Activated CD8-positive, alpha-beta T cell treated with anti-CD3 and anti-CD28 coated beads for 36 hours (primary cell): ENCODE measurements at regions of chr18 and their contacts with region 1.

Region 1: DNA sequence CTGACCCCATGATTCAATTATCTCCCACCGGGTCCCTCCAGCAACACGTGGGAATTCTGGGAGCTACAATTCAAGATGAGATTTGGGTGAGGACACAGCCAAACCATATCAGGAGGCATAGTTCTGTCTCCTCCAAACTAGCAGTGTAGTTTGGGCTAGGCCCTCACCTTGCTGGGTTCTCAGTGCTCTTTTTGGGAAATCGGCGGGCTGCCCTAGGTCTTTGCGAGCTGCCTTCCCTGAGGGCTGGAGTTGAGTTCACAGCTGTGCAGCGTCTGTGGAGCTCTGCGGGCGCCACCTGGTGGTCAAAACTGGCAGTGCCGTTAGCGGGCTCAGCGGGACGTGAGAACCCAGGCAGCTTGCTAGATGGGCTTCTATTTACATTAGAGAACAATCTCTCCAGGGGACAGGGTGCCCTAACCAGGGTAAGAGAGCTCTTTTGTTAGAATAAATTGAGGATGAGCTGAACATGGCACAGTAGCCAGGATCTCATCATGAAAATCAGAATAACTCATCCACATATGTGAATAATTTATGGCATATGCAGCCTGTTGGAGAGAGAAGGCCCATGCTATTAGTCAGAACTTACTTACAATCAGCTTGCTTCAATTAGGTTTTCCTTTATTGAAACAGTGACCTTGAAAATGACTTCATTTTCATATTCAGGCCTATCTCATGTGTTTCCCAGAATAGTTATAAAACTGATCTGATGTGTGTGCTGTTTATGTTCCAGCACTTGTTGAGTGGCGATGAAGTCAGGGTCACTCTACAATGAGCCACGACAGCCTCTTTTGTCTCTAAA is 27.4 kb upstream of the YES1 start:
- DNase-seq: peak; percentile 96
- ATAC-seq: peak; percentile 99
- H3K4me3 Mint-ChIP-seq: no peak overlapping the region
- H3K27ac Mint-ChIP-seq: no peak overlapping the region
- H3K4me1 Mint-ChIP-seq: peaks cover 5% of the 10 kb centered on the region
- H3K27me3 Mint-ChIP-seq: no peaks in the 10 kb centered on the region
- CTCF ChIP-seq: peak; percentile 97

Region 2: GRCh38 chr18:712401-713134 is 126.9 kb before region 1 on chr18 and contains the start of gene ENOSF1:
- CTCF ChIA-PET with region 1: interaction called, 32 read pairs
- POLR2A ChIA-PET with region 1: no interaction called
- intact Hi-C with region 1: loop called (anchors 10 kb)
- DNase-seq: peak; percentile 91
- ATAC-seq: peak; percentile 87
- H3K4me3 Mint-ChIP-seq: peak within 1 kb of the TSS; percentile 96
- H3K27ac Mint-ChIP-seq: peak within 1 kb of the TSS; percentile 97
- H3K4me1 Mint-ChIP-seq: peaks cover 64% of the 10 kb centered on the region
- H3K27me3 Mint-ChIP-seq: no peaks in the 10 kb centered on the region
- CTCF ChIP-seq: peak; percentile 87
- total RNA-seq, gene ENOSF1: 113 to 114 TPM

Region 3: GRCh38 chr18:741931-742512 is 97.4 kb before region 1 on chr18:
- CTCF ChIA-PET with region 1: interaction called, 224 read pairs
- POLR2A ChIA-PET with region 1: no interaction called
- intact Hi-C with region 1: loop called (anchors 2 kb)
- DNase-seq: no peak
- ATAC-seq: peak; percentile 83
- H3K4me3 Mint-ChIP-seq: no peak overlapping the region
- H3K27ac Mint-ChIP-seq: no peak overlapping the region
- H3K4me1 Mint-ChIP-seq: peaks cover 2% of the 10 kb centered on the region
- H3K27me3 Mint-ChIP-seq: no peaks in the 10 kb centered on the region
- CTCF ChIP-seq: peak; percentile 74

Region 4: DNA sequence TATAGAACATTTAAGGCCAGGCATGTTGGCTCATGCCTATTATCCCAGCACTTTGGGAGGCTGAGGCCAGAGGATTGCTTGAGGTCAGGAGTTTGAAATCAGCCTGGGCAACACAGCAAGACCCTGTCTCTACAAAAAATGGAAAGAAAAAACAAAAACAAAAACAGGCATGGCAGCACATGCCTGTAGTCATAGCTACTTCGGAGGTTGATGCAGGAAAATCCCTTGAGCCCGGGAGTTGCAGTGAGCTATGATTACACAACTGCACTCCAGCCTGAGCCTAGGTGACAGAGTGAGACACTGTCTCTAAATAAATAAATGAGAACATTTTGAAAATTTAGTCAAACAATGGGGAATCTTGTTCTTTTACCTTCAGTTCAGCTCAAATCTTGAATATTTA is 15.2 kb before region 1 on chr18:
- CTCF ChIA-PET with region 1: interaction called, 54 read pairs
- POLR2A ChIA-PET with region 1: no interaction called
- intact Hi-C with region 1: no loop called
- DNase-seq: no peak
- ATAC-seq: no peak
- H3K4me3 Mint-ChIP-seq: no peak overlapping the region
- H3K27ac Mint-ChIP-seq: no peak overlapping the region
- H3K4me1 Mint-ChIP-seq: peaks cover 14% of the 10 kb centered on the region
- H3K27me3 Mint-ChIP-seq: no peaks in the 10 kb centered on the region
- CTCF ChIP-seq: no peak

Region 5: DNA sequence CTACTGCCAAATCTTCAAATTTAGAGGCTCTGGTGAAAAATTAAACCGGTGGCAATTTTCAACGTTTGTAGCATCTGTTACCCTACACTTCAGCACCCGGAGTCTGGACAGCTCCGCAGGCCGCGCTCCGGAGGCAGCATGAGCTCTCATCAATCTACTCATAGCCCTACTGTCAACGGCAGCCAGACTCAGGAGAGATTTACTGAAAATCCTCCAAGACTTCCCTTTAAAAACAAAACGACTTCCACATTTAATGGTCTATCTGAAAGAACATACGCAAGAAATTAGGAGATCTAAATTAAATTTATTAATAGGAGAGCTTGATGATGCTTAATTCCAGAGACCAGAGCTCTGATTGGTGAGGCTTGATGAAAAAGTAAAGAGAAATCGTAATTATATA is 64.3 kb after region 1 on chr18:
- CTCF ChIA-PET with region 1: no interaction called
- POLR2A ChIA-PET with region 1: no interaction called
- intact Hi-C with region 1: no loop called
- DNase-seq: peak; percentile 72
- ATAC-seq: peak; percentile 55
- H3K4me3 Mint-ChIP-seq: no peak overlapping the region
- H3K27ac Mint-ChIP-seq: no peak overlapping the region
- H3K4me1 Mint-ChIP-seq: peaks cover 13% of the 10 kb centered on the region
- H3K27me3 Mint-ChIP-seq: peaks cover 60% of the 10 kb centered on the region
- CTCF ChIP-seq: no peak